GM12878 (cell line): ENCODE measurements at regions of chr3 and their contacts with region 1.

Region 1: GRCh38 chr3:68017067-68017466 is 362.7 kb upstream of the SUCLG2 start:
- DNase-seq: no peak
- ATAC-seq: no peak
- H3K4me3 ChIP-seq: no peak overlapping the region
- H3K27ac ChIP-seq: no peak overlapping the region
- H3K4me1 ChIP-seq: no peaks in the 10 kb centered on the region
- H3K27me3 ChIP-seq: no peaks in the 10 kb centered on the region
- CTCF ChIP-seq: no peak
- EP300 ChIP-seq: no peak
- POLR2A ChIP-seq: no peak
- RAD21 ChIP-seq: no peak

Region 2: GRCh38 chr3:67384760-67385397 is 632.2 kb before region 1 on chr3:
- CTCF ChIA-PET with region 1: interaction called, 5 read pairs
- POLR2A ChIA-PET with region 1: no interaction called
- RAD21 ChIA-PET with region 1: no interaction called
- SMC1A ChIA-PET with region 1: interaction called, 3 read pairs
- in situ Hi-C with region 1: no loop called
- intact Hi-C with region 1: loop called (anchors 10 kb)
- DNase-seq: no peak
- ATAC-seq: peak; percentile 68
- H3K4me3 ChIP-seq: no peak overlapping the region
- H3K27ac ChIP-seq: no peak overlapping the region
- H3K4me1 ChIP-seq: peaks cover 6% of the 10 kb centered on the region; the same call in 1 of the 2 replicates
- H3K27me3 ChIP-seq: no peaks in the 10 kb centered on the region
- CTCF ChIP-seq: peak; percentile 39 to 61 (median 42)
- EP300 ChIP-seq: no peak
- POLR2A ChIP-seq: no peak
- RAD21 ChIP-seq: peak; percentile 63

Region 3: DNA sequence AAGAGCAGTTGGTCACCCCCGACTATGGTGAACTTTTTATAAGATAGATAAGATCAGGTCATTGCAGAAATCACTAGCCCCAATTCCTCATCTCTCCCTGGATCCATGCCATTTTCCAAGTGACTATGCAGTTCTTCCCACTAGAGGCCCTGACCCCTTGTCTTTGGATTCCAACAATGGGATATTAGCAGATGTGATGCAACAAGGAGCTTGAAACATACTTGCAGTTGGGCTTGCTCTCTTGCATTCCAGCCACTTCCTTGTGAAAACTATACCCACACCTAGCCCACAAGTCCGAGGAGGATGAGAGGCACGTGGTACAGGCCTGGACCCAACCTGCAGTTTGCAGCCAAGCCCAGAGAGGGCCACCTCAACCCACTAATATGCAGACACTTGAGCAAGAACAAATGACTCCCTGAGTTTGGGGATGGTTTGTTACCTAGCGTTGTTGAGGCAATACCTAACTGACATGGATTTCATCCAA is 423.3 kb before region 1 on chr3:
- CTCF ChIA-PET with region 1: no interaction called
- POLR2A ChIA-PET with region 1: no interaction called
- RAD21 ChIA-PET with region 1: no interaction called
- SMC1A ChIA-PET with region 1: no interaction called
- in situ Hi-C with region 1: no loop called
- intact Hi-C with region 1: loop called (anchors 10 kb)
- DNase-seq: no peak
- ATAC-seq: peak; percentile 66
- H3K4me3 ChIP-seq: no peak overlapping the region
- H3K27ac ChIP-seq: no peak overlapping the region
- H3K4me1 ChIP-seq: 0 out of 2 replicates have a peak, but pooled peaks cover 3% of the 10 kb centered on the region
- H3K27me3 ChIP-seq: no peaks in the 10 kb centered on the region
- CTCF ChIP-seq: peak; percentile 25 to 29 (median 28); a peak in 4 of 6 replicates
- EP300 ChIP-seq: no peak
- POLR2A ChIP-seq: no peak
- RAD21 ChIP-seq: peak; percentile 35

Region 4: DNA sequence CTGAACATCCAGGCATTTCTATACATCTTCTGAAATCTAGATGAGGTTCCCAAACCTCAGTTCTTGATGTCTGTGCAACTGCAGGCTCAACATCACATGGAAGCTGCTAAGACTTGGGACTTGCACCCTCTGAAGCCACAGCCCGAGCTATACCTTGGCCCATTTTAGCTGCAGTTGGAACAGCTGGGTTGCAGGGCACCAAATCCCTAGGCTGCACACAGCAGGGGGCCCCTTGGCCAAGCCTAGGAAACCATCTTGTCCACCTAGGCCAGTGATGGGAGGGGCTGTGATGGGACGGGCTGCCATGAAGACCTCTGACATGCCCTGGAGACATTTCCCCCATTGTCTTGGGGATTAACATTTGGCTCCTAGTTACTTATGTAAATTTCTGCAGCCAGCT is 53.1 kb after region 1 on chr3:
- CTCF ChIA-PET with region 1: no interaction called
- POLR2A ChIA-PET with region 1: no interaction called
- RAD21 ChIA-PET with region 1: no interaction called
- SMC1A ChIA-PET with region 1: no interaction called
- in situ Hi-C with region 1: no loop called
- intact Hi-C with region 1: no loop called
- DNase-seq: no peak
- ATAC-seq: no peak
- H3K4me3 ChIP-seq: no peak overlapping the region
- H3K27ac ChIP-seq: no peak overlapping the region
- H3K4me1 ChIP-seq: no peaks in the 10 kb centered on the region
- H3K27me3 ChIP-seq: no peaks in the 10 kb centered on the region
- CTCF ChIP-seq: no peak
- EP300 ChIP-seq: no peak
- POLR2A ChIP-seq: no peak
- RAD21 ChIP-seq: no peak

Region 5: DNA sequence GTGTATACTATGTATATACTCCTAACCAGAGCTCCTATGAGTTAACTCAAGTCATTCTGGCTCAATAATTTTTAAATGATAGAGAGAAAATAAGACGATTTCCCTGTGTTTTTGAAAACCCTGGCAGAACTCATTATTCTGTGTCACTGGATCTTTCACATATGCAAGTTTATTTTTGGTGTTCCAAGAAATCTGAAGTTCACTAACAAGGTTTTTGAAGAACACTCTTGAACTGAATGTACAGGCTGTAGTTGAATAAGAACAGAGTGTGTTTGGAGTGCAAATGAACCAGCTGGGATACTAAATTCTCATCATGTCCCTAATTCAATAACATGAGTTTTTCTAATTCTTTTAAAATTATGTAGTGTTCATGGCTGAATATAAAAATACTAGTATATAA is 104.2 kb after region 1 on chr3:
- CTCF ChIA-PET with region 1: no interaction called
- POLR2A ChIA-PET with region 1: no interaction called
- RAD21 ChIA-PET with region 1: no interaction called
- SMC1A ChIA-PET with region 1: no interaction called
- in situ Hi-C with region 1: no loop called
- intact Hi-C with region 1: no loop called
- DNase-seq: no peak
- ATAC-seq: no peak
- H3K4me3 ChIP-seq: no peak overlapping the region
- H3K27ac ChIP-seq: no peak overlapping the region
- H3K4me1 ChIP-seq: no peaks in the 10 kb centered on the region
- H3K27me3 ChIP-seq: no peaks in the 10 kb centered on the region
- CTCF ChIP-seq: no peak
- EP300 ChIP-seq: no peak
- POLR2A ChIP-seq: no peak
- RAD21 ChIP-seq: no peak